ENCODE measurements at regions of chr15 and their contacts with region 1.

Region 1: DNA sequence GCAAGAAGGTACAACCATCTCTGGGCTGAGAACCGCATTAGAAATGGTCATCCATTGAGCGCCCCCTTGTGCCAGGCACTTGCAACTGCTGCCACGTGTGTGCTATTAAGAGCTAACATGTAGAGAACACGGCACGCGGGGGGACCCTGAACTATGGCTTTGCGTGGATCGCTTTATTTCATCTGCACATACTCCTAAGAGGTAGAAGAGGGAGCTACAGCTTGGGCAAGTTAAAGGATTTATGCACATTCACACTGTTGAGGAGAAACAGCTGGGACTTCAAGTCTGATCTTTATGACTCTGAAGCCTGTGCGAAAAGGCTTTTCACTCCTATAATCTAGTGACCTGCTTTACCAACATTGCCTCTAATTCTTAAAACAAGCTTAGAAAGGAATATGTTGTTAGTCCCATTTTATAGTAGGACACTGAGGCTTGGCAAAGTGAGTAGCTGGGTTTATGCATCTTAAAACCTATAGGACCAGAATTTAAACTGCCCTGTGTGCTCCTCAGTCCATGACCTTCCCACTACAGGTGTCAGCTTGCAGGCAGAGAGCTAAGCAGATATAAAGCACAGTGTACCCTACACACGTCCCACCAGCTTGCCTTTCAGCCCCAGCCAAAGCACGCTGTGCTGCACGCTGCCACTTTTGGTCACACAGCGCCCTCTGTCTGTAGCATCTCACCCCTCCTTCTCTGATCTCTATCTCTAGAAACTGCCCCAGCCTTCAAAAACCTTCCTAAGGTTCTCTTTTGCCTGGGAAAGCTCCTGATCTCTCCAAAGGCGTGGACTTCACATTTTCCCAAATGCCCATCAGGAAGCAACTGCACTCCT is 57.8 kb downstream of the STARD5 start:
- DNase-seq: peak; percentile 60 to 81 (median 75)
- ATAC-seq: peak; percentile 92
- H3K4me3 ChIP-seq: peak overlapping the region; percentile 50
- H3K4me3 Mint-ChIP-seq: peak overlapping the region; percentile 75 to 89 (median 81)
- H3K27ac ChIP-seq: no peak overlapping the region
- H3K27ac Mint-ChIP-seq: peak overlapping the region in 5 of 9 donors; percentile 9 to 86 (median 48)
- H3K4me1 ChIP-seq: peaks cover 9 to 25% of the 10 kb centered on the region in 2 donors
- H3K4me1 Mint-ChIP-seq: peaks cover 21 to 43% (median 35%) of the 10 kb centered on the region in 7 donors
- H3K27me3 ChIP-seq: no peaks in the 10 kb centered on the region
- H3K27me3 Mint-ChIP-seq: peaks cover 0 to 13% (median 5%) of the 10 kb centered on the region in 5 donors

Region 2: GRCh38 chr15:80455668-80456442 is 810.3 kb before region 1 on chr15:
- CTCF ChIA-PET with region 1: interaction called, 13 read pairs
- POLR2A ChIA-PET with region 1: no interaction called
- intact Hi-C with region 1: loop called in 1 of 2 experiments (anchors 1 kb)
- DNase-seq: peak; percentile 19 to 62 (median 50)
- ATAC-seq: peak; percentile 78
- H3K4me3 ChIP-seq: no peak overlapping the region
- H3K4me3 Mint-ChIP-seq: no peak overlapping the region
- H3K27ac ChIP-seq: no peak overlapping the region
- H3K27ac Mint-ChIP-seq: no peak overlapping the region
- H3K4me1 ChIP-seq: no peaks in the 10 kb centered on the region
- H3K4me1 Mint-ChIP-seq: no peaks in the 10 kb centered on the region
- H3K27me3 ChIP-seq: no peaks in the 10 kb centered on the region
- H3K27me3 Mint-ChIP-seq: peaks cover 0 to 10% (median 6%) of the 10 kb centered on the region in 5 donors

Region 3: DNA sequence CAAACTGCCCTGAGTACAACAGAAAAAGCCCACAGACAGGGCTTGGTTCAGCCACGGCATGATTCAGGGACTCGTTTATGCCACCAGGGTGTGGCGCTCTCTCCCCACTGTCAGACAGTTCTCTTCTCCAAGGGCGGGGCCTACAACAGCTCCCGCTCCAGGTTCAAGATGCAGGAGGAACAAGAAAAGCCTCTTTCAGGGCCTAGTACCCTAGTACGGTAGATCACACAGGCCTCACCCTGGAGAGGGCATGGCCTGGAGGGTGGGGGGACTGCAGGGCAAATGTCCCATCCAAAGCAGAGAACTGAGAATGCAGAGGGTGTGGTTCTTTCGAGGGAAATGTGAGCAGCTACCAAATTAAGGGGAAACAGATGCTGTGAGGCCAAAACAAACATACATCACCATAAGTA is 288.5 kb before region 1 on chr15:
- CTCF ChIA-PET with region 1: interaction called, 16 read pairs
- POLR2A ChIA-PET with region 1: no interaction called
- intact Hi-C with region 1: loop called in 1 of 2 experiments (anchors 1 kb)
- DNase-seq: peak in 3 of 9 donors; percentile 25 to 38 (median 31)
- ATAC-seq: peak; percentile 77
- H3K4me3 ChIP-seq: no peak overlapping the region
- H3K4me3 Mint-ChIP-seq: no peak overlapping the region
- H3K27ac ChIP-seq: no peak overlapping the region
- H3K27ac Mint-ChIP-seq: peak overlapping the region in 7 of 9 donors; percentile 16 to 70 (median 28)
- H3K4me1 ChIP-seq: no peaks in the 10 kb centered on the region
- H3K4me1 Mint-ChIP-seq: peaks cover 25 to 57% (median 54%) of the 10 kb centered on the region in 7 donors
- H3K27me3 ChIP-seq: no peaks in the 10 kb centered on the region
- H3K27me3 Mint-ChIP-seq: no peaks in the 10 kb centered on the region

Region 4: GRCh38 chr15:81106560-81106959 is 159.6 kb before region 1 on chr15:
- CTCF ChIA-PET with region 1: interaction called, 26 read pairs
- POLR2A ChIA-PET with region 1: no interaction called
- intact Hi-C with region 1: loop called (anchors 1 kb)
- DNase-seq: peak in 8 of 9 donors; percentile 2 to 43 (median 31)
- ATAC-seq: peak; percentile 54
- H3K4me3 ChIP-seq: no peak overlapping the region
- H3K4me3 Mint-ChIP-seq: no peak overlapping the region
- H3K27ac ChIP-seq: no peak overlapping the region
- H3K27ac Mint-ChIP-seq: peak overlapping the region in 1 of 9 donors; percentile 73
- H3K4me1 ChIP-seq: no peaks in the 10 kb centered on the region
- H3K4me1 Mint-ChIP-seq: peaks cover 0 to 12% (median 0%) of the 10 kb centered on the region in 7 donors
- H3K27me3 ChIP-seq: no peaks in the 10 kb centered on the region
- H3K27me3 Mint-ChIP-seq: peaks cover 11 to 66% (median 20%) of the 10 kb centered on the region in 5 donors

Region 5: DNA sequence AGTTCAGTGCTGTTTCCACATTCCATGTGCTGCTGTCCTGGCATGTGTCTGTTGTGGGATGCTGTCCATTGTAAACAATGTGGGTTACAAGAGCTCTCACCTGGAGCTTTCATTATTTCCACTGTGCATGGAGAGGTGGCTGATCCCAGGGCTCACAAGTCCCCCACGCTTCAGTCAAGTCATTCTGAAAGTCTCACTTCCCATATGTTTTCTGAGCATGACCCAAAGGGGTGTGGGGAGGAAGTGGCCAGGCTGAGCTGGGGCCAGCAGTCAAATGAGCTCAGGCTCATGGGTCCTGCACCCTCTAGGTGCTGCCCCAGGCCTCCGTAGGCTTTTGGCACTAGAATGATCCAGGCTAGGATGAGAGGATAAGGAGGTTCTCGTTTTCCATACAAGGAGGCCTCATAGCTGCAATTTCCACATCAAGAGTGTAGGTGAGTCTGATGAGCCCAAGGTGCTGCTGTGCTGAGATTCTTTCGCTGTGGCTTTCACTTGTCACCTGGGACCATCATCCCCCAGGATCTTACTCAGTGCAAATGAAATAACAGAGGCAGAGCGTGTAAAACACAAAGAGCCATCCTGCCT is 35.7 kb after region 1 on chr15:
- CTCF ChIA-PET with region 1: interaction called, 20 read pairs
- POLR2A ChIA-PET with region 1: interaction called, 642 read pairs
- intact Hi-C with region 1: no loop called
- DNase-seq: peak in 1 of 9 donors; percentile 60
- ATAC-seq: peak; percentile 61
- H3K4me3 ChIP-seq: peak overlapping the region; percentile 74
- H3K4me3 Mint-ChIP-seq: peak overlapping the region; percentile 80 to 100 (median 98)
- H3K27ac ChIP-seq: peak overlapping the region; percentile 87
- H3K27ac Mint-ChIP-seq: peak overlapping the region; percentile 79 to 100 (median 96)
- H3K4me1 ChIP-seq: peaks cover 46 to 59% of the 10 kb centered on the region in 2 donors
- H3K4me1 Mint-ChIP-seq: peaks cover 50 to 66% (median 64%) of the 10 kb centered on the region in 7 donors
- H3K27me3 ChIP-seq: no peaks in the 10 kb centered on the region
- H3K27me3 Mint-ChIP-seq: no peaks in the 10 kb centered on the region

Region 6: GRCh38 chr15:82046666-82047452 is 780.7 kb after region 1 on chr15:
- CTCF ChIA-PET with region 1: no interaction called
- POLR2A ChIA-PET with region 1: no interaction called
- intact Hi-C with region 1: loop called in 1 of 2 experiments (anchors 10 kb)
- DNase-seq: peak; percentile 85 to 93 (median 91)
- ATAC-seq: peak; percentile 86
- H3K4me3 ChIP-seq: peak overlapping the region; percentile 93
- H3K4me3 Mint-ChIP-seq: peak overlapping the region; percentile 88 to 94 (median 91)
- H3K27ac ChIP-seq: peak overlapping the region; percentile 72
- H3K27ac Mint-ChIP-seq: peak overlapping the region in 8 of 9 donors; percentile 31 to 93 (median 82)
- H3K4me1 ChIP-seq: peaks cover 0 to 8% of the 10 kb centered on the region in 2 donors
- H3K4me1 Mint-ChIP-seq: peaks cover 4 to 21% (median 11%) of the 10 kb centered on the region in 7 donors
- H3K27me3 ChIP-seq: no peaks in the 10 kb centered on the region
- H3K27me3 Mint-ChIP-seq: peaks cover 8 to 45% (median 11%) of the 10 kb centered on the region in 5 donors